Cardiac septum (tissue), 1 donor: ENCODE measurements at regions of chr6 and their contacts with region 1.

Region 1: GRCh38 chr6:118097576-118097975 is 190.5 kb downstream of the SLC35F1 start:
- DNase-seq: no peak

Region 2: DNA sequence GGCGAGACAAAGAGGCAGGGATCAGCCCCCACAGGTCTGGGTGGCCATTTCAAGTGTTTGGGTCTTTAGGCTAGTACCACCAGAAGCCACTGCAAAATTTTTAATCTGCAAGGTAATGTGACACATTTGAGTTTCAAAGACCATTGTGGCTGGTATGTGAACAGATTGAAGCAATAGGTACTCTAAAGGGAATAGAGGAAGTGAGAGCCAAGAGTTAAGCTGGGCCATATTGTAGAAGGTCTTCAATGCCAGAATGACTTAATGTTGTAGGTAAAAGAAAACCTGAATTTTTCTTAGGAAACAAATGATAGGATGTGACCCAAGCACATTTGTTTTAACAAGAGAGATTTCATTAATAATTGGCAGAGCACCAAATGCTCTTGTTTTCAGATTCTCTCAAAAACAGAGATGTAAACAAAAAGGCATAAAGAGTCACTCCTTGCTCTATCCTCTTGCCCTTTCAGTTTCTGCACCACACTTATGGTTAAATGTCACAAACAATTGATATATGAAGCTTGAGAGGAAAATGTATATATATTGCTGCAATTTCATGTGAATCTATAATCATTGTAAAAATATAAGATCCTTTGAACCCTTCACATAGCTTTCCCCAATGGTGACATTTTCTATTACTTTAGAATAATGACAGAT is 143.4 kb after region 1 on chr6:
- intact Hi-C with region 1: loop called (anchors 10 kb)
- DNase-seq: no peak